ENCODE measurements at regions of chr11 and their contacts with region 1.

Region 1: GRCh38 chr11:76670485-76671236 is at the start of gene LRRC32:
- DNase-seq: peak; percentile 84
- ATAC-seq: peak; percentile 48
- total RNA-seq, gene LRRC32: 32.5 TPM

Region 2: DNA sequence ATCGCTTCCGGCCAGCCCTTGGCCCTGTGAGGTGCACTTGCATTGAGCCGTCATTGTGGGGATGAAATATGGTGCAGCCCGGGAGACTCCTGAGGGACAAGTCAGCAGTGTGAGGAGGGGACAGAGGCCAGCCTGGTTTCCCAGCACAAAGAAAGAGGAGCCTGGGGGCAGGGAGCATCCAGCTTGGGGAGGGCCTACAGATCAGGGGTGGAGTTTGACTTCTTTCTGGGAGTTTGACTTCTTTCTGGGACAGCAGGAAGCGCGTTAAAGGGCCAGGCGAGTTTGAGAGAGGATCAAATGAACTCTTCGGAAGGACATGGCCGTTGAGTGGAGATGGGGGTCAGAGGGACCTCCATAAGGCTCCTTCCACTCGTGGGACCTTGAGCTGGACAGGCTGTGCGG is 92.0 kb before region 1 on chr11:
- intact Hi-C with region 1: loop called (anchors 1 kb)
- DNase-seq: peak; percentile 72
- ATAC-seq: peak; percentile 73

Region 3: GRCh38 chr11:76598426-76598839 is 72.2 kb before region 1 on chr11:
- intact Hi-C with region 1: loop called (anchors 5 kb)
- DNase-seq: no peak
- ATAC-seq: peak; percentile 33

Region 4: DNA sequence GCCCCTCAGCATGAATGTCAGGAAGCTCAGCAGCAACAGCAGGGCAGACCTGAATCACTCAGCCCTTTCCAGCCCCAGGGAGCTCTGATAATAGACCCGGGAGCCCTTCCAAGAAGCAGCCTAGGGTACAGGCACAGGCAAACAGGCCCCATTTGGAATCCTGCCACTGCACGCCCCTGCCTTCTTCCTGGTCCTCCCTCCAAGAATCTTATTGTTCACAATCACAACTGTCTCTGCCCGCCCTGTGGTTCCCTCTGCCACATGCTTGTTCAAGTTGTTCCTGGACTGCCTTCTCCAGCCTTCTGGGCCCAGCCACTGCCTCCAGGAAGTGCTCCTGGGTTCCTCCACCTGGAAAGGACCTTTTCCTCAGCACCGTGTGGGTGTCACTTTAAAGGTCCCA is 54.7 kb before region 1 on chr11:
- intact Hi-C with region 1: loop called (anchors 5 kb)
- DNase-seq: peak; percentile 78
- ATAC-seq: peak; percentile 78

Measured in Right ventricle myocardium inferior (tissue), 1 donor.